Right ventricle myocardium inferior (tissue), 1 donor: ENCODE measurements at regions of chr20 and their contacts with region 1.

Region 1: GRCh38 chr20:48620519-48621254 is 207.1 kb downstream of the PREX1 start:
- DNase-seq: peak; percentile 91
- ATAC-seq: peak; percentile 93

Region 2: DNA sequence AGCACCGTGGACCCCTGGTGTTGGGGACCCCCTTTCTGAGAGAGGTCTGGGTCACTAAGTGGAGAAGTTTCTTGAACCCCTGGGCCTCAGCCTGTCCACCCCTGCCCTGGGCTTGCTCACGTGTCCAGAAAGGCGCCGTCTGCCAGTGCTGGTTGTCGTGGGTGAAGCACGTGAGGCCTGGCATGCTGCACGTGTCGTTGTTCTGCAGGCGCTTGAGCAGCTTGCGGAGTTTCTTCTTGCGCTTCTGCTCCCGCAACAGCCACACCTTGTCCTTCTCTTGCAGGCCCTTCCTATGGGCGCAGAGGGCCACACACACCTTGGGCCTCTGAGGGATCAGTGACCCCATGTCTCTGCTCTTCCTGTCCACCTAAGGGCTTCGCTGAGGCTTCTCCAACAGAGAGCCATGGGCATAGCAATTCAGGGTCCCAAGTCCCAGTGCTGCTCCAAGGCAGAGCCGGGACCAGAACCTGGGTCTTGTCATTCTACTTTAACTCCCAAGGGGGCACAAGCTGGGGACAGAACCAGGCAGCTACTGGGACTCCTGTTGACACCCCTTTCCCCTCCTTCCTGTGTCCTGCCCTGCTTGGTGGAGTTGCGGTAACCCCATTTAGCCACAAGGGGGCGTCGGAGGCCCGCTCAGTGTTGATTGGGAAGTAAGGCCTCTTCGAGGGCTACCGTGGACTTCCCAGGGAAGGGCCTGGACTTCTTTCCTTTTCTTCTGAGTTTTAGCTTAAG is 957.2 kb before region 1 on chr20:
- intact Hi-C with region 1: loop called (anchors 1 kb)
- DNase-seq: peak; percentile 92
- ATAC-seq: peak; percentile 82

Region 3: GRCh38 chr20:47725248-47725973 is 895.3 kb before region 1 on chr20:
- intact Hi-C with region 1: loop called (anchors 1 kb)
- DNase-seq: peak; percentile 74
- ATAC-seq: peak; percentile 27

Region 4: GRCh38 chr20:47857566-47858471 is 762.9 kb before region 1 on chr20:
- intact Hi-C with region 1: loop called (anchors 5 kb)
- DNase-seq: no peak
- ATAC-seq: peak; percentile 62